Heart left ventricle (tissue), 16 donors: ENCODE measurements at regions of chr4 and their contacts with region 1.

Region 1: DNA sequence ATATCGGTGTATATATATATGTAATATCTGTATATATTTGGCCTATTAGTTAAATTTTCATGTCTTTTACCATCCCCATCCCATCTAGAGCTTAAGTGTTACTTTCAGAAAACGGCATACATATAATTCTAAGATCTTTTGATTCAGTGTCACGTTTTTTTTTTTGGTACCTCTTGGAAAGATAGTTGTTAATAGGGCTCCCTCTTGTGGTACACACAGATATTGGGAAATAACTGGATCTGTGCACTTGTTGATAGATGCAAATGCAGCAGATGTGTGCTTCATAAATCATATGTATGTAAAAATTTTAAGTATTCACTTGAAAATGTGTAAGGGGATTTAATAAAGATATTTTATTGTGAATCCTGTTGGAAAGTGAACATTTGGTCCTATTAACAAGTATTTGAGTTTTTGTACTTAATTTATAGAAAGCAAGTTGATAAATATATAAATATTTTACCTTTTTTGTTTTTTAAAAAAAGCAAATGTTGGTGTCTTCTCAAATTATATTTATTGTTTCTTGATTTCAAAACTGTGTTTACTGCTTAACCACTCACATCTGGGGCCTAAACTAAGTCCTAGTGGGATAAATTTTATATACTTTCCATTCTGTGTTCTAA is 74.7 kb downstream of the PAQR3 start:
- DNase-seq: no peak
- ATAC-seq: peak in 2 of 4 donors; percentile 72 to 78
- H3K4me3 ChIP-seq: no peak overlapping the region
- H3K27ac ChIP-seq: no peak overlapping the region
- H3K4me1 ChIP-seq: peaks cover 0 to 2% (median 0%) of the 10 kb centered on the region in 12 donors
- H3K27me3 ChIP-seq: no peaks in the 10 kb centered on the region
- CTCF ChIP-seq: peak; percentile 69 to 92 (median 82)
- POLR2A ChIP-seq: no peak

Region 2: DNA sequence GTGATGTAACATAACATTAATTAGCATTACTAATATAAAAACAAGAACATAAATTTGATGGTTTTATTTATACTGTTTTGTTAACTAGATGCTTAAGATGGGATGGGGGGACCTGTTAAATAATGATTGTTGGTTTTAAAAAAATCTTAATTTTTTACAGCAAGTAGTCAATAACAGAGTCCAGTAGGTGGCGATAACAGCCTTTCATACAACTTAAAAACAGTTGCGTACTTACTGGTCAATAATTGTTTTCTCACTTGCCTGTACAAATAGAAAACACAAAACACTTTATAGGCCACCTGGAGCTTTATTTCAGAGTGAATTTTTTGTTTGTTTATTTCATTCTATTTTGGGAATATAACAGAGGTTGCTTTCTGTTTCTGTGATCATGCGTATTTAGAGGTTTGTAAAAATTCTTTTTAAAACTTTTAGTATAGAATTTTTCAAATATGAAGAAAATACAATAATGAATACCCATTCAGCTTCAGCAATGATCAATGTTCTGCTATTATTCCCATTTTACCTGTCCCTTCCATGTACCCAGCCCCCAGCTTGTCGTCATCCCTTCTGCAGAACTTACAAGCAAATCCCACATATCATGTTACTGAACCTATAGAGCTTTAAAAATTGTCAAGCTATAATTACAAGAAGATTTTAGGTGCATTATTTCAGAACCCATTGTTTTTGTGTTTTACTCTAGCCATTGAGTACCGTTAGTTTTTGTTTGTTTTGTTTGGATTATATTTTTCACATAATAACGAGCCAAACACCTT is 904.8 kb before region 1 on chr4:
- intact Hi-C with region 1: loop called (anchors 5 to 10 kb)
- DNase-seq: no peak
- ATAC-seq: no peak
- H3K4me3 ChIP-seq: peak overlapping the region in 5 of 12 donors; percentile 14 to 43 (median 29)
- H3K27ac ChIP-seq: no peak overlapping the region
- H3K4me1 ChIP-seq: peaks cover 0 to 5% (median 0%) of the 10 kb centered on the region in 12 donors
- H3K27me3 ChIP-seq: no peaks in the 10 kb centered on the region
- CTCF ChIP-seq: peak; percentile 51 to 77 (median 66)
- POLR2A ChIP-seq: no peak

Region 3: GRCh38 chr4:78529569-78530209 is 334.8 kb before region 1 on chr4:
- intact Hi-C with region 1: loop called in 2 of 10 experiments (anchors 5 to 10 kb)
- DNase-seq: no peak
- ATAC-seq: no peak
- H3K4me3 ChIP-seq: no peak overlapping the region
- H3K27ac ChIP-seq: no peak overlapping the region
- H3K4me1 ChIP-seq: no peaks in the 10 kb centered on the region
- H3K27me3 ChIP-seq: no peaks in the 10 kb centered on the region
- CTCF ChIP-seq: no peak
- POLR2A ChIP-seq: no peak

Region 4: GRCh38 chr4:78612398-78613178 is 251.9 kb before region 1 on chr4:
- intact Hi-C with region 1: loop called (anchors 1 to 5 kb)
- DNase-seq: peak in 4 of 5 donors; percentile 29 to 41 (median 36)
- ATAC-seq: peak; percentile 53 to 81 (median 72)
- H3K4me3 ChIP-seq: no peak overlapping the region
- H3K27ac ChIP-seq: no peak overlapping the region
- H3K4me1 ChIP-seq: peaks cover 0 to 30% (median 5%) of the 10 kb centered on the region in 12 donors
- H3K27me3 ChIP-seq: no peaks in the 10 kb centered on the region
- CTCF ChIP-seq: peak; percentile 43 to 77 (median 67)
- POLR2A ChIP-seq: no peak

Region 5: GRCh38 chr4:78644744-78645330 is 219.7 kb before region 1 on chr4:
- intact Hi-C with region 1: loop called in 8 of 10 experiments (anchors 10 kb)
- DNase-seq: peak in 4 of 5 donors; percentile 63 to 74 (median 70)
- ATAC-seq: peak; percentile 77 to 94 (median 90)
- H3K4me3 ChIP-seq: no peak overlapping the region
- H3K27ac ChIP-seq: peak overlapping the region in 10 of 12 donors; percentile 54 to 94 (median 69)
- H3K4me1 ChIP-seq: peaks cover 0 to 52% (median 18%) of the 10 kb centered on the region in 12 donors
- H3K27me3 ChIP-seq: no peaks in the 10 kb centered on the region
- CTCF ChIP-seq: peak; percentile 79 to 97 (median 94)
- POLR2A ChIP-seq: no peak

Region 6: GRCh38 chr4:79338148-79338547 is 473.6 kb after region 1 on chr4:
- intact Hi-C with region 1: no loop called
- DNase-seq: no peak
- ATAC-seq: no peak
- H3K4me3 ChIP-seq: no peak overlapping the region
- H3K27ac ChIP-seq: no peak overlapping the region
- H3K4me1 ChIP-seq: no peaks in the 10 kb centered on the region
- H3K27me3 ChIP-seq: no peaks in the 10 kb centered on the region
- CTCF ChIP-seq: no peak
- POLR2A ChIP-seq: no peak